B cell (primary cell): ENCODE measurements at regions of chr10 and their contacts with region 1.

Region 1: DNA sequence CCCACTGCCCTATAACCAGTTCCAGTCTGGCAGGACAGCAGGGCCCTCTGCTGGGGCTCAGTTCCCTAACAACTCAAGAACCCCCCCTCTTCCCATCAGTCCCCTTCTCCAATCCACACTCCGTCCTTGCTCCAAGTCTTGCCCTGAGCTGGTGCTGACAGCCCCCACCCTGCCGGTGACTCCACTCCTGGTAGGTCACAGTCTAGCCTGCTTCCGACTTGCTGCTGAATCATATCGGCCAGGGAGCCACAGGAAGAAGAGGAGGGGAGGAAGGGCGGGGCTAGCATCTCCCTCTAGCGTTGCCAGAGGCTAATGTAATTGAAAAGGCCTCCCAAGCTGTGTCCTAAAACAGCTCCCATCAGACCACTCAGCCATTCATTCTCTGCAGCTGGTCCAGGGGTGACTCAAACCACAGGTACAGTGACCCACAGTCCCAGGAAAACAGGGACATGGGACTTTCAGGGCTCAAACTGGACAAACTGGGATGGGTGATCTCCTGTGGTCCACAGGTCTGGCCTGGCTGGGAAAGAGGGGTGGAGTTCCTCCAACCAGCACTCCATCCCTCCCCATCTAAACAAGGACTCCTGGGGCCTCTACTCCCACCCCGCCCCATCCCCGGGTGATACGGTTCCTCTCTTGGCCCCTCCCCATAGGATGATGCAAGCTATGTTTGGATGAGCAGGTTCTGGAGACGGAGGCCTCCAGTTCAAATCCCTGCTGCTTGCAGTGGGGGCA is 158.8 kb downstream of the SH3PXD2A start:
- DNase-seq: peak; percentile 57
- ATAC-seq: no peak
- H3K4me3 ChIP-seq: no peak overlapping the region
- H3K4me3 Mint-ChIP-seq: peak overlapping the region; percentile 51
- H3K27ac ChIP-seq: no peak overlapping the region
- H3K27ac Mint-ChIP-seq: no peak overlapping the region
- H3K4me1 ChIP-seq: peaks cover 25 to 42% of the 10 kb centered on the region in 2 donors
- H3K4me1 Mint-ChIP-seq: peaks cover 35% of the 10 kb centered on the region
- H3K27me3 ChIP-seq: peaks cover 0 to 3% (median 1%) of the 10 kb centered on the region in 4 experiments
- H3K27me3 Mint-ChIP-seq: no peaks in the 10 kb centered on the region
- CTCF ChIP-seq: peak; percentile 25

Region 2: GRCh38 chr10:103584216-103585010 is 112.2 kb before region 1 on chr10:
- CTCF ChIA-PET with region 1: no interaction called
- POLR2A ChIA-PET with region 1: interaction called, 3 read pairs
- intact Hi-C with region 1: loop called (anchors 1 kb)
- DNase-seq: peak; percentile 86
- ATAC-seq: peak; percentile 76
- H3K4me3 ChIP-seq: peak overlapping the region; percentile 53 to 65 (median 64)
- H3K4me3 Mint-ChIP-seq: peak overlapping the region; percentile 92
- H3K27ac ChIP-seq: peak overlapping the region in 1 of 2 donors; percentile 41
- H3K27ac Mint-ChIP-seq: peak overlapping the region; percentile 82
- H3K4me1 ChIP-seq: peaks cover 3% of the 10 kb centered on the region in 2 donors
- H3K4me1 Mint-ChIP-seq: peaks cover 7% of the 10 kb centered on the region
- H3K27me3 ChIP-seq: no peaks in the 10 kb centered on the region
- H3K27me3 Mint-ChIP-seq: no peaks in the 10 kb centered on the region
- CTCF ChIP-seq: no peak

Region 3: DNA sequence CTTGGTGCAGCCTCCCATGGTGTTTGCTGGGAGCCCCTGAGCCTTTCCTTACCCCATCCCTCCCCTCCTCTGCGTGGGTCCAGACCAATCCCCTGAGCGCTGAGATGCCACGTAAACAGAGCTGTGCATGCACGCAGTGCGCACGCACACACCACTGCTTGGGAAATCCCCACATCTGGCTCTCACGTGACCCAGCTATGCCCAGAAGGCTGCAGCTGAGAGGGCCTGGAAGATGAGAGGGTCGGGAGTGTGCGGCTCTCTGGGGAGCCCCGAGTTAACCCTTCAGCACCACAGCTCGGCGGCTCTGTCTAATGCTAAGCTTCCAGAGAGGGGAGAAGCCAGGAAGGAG is 18.4 kb before region 1 on chr10:
- CTCF ChIA-PET with region 1: interaction called, 16 read pairs
- POLR2A ChIA-PET with region 1: no interaction called
- intact Hi-C with region 1: loop called (anchors 1 kb)
- DNase-seq: peak; percentile 96
- ATAC-seq: peak; percentile 93
- H3K4me3 ChIP-seq: peak overlapping the region in 4 of 5 experiments; percentile 21 to 57 (median 42)
- H3K4me3 Mint-ChIP-seq: peak overlapping the region; percentile 90
- H3K27ac ChIP-seq: peak overlapping the region; percentile 74 to 80
- H3K27ac Mint-ChIP-seq: peak overlapping the region; percentile 94
- H3K4me1 ChIP-seq: peaks cover 30 to 31% of the 10 kb centered on the region in 2 donors
- H3K4me1 Mint-ChIP-seq: peaks cover 33% of the 10 kb centered on the region
- H3K27me3 ChIP-seq: no peaks in the 10 kb centered on the region
- H3K27me3 Mint-ChIP-seq: no peaks in the 10 kb centered on the region
- CTCF ChIP-seq: no peak